Activated B cell treated with CpG ODN at 0.5 μM for 24 hours (primary cell): ENCODE measurements at regions of chr5 and their contacts with region 1.

Region 1: DNA sequence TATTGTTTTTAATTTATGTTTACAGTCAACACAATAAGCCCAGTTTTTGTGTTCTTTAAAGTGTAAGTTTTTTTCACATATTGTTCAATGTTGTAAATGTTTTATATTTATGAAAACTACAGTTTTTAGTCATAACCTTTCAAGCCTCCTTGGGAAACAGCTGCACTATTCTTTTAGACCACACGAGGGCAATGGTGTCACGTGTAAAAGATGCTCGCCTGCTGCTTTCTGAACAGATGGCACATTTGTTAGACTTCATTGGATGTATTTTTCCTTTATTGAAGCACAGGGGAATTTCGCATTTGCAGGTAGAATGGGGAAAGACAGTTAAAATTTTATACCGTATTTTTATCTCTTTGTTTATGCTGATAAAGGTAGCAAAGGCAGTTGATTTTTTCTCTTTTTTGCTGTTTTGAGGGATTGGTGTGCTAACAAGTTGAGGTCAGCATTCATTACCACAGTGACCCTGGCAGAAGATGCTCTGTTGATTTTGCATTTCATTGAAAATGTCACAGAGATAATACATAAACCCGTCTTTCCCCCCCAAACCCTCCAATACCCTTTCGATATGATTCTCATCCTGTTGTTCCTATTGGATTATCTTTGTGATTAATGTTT is 59.0 kb downstream of the MAT2B start:
- DNase-seq: peak; percentile 21
- ATAC-seq: peak; percentile 64
- H3K4me3 Mint-ChIP-seq: no peak overlapping the region
- H3K27ac Mint-ChIP-seq: no peak overlapping the region
- H3K4me1 Mint-ChIP-seq: peaks cover 24% of the 10 kb centered on the region
- H3K27me3 Mint-ChIP-seq: peaks cover 38% of the 10 kb centered on the region
- CTCF ChIP-seq: peak; percentile 90

Region 2: GRCh38 chr5:163005949-163006348 is 558.5 kb before region 1 on chr5:
- CTCF ChIA-PET with region 1: no interaction called
- POLR2A ChIA-PET with region 1: no interaction called
- intact Hi-C with region 1: no loop called
- DNase-seq: no peak
- ATAC-seq: no peak
- H3K4me3 Mint-ChIP-seq: no peak overlapping the region
- H3K27ac Mint-ChIP-seq: no peak overlapping the region
- H3K4me1 Mint-ChIP-seq: no peaks in the 10 kb centered on the region
- H3K27me3 Mint-ChIP-seq: no peaks in the 10 kb centered on the region
- CTCF ChIP-seq: no peak

Region 3: GRCh38 chr5:163473635-163474243 is 90.7 kb before region 1 on chr5:
- CTCF ChIA-PET with region 1: interaction called, 3 read pairs
- POLR2A ChIA-PET with region 1: no interaction called
- intact Hi-C with region 1: loop called (anchors 5 kb)
- DNase-seq: no peak
- ATAC-seq: peak; percentile 65
- H3K4me3 Mint-ChIP-seq: no peak overlapping the region
- H3K27ac Mint-ChIP-seq: no peak overlapping the region
- H3K4me1 Mint-ChIP-seq: no peaks in the 10 kb centered on the region
- H3K27me3 Mint-ChIP-seq: no peaks in the 10 kb centered on the region
- CTCF ChIP-seq: no peak

Region 4: DNA sequence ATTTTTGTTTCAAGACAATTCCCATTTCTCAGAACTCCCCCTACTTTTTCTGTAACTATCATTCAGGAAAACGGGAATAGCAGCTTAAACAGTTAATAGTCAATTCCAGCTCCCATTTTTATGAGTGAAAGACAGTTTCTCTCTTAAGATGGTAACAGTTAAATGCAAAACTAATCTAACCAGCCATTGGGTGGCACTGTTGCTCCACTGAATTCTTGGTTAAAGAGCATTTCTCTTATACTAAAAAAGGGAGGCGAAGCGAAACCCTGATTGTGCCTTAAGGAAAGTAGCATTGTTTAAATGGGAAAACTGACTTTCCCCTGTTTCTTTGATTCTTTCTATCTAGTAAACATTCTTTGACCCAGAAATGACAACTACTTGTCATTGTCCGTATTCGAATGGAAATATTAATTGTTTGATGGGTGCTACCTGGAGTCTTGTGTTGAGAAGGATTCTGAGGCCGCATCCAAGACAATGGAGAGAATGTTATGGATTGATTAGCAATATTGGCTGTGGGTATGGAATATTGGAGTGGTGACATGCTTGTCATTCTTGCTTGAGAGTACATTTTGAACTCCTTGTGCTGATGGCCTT is 448.7 kb after region 1 on chr5:
- CTCF ChIA-PET with region 1: interaction called, 3 read pairs
- POLR2A ChIA-PET with region 1: no interaction called
- intact Hi-C with region 1: loop called (anchors 1 kb)
- DNase-seq: no peak
- ATAC-seq: peak; percentile 50
- H3K4me3 Mint-ChIP-seq: no peak overlapping the region
- H3K27ac Mint-ChIP-seq: no peak overlapping the region
- H3K4me1 Mint-ChIP-seq: peaks cover 13% of the 10 kb centered on the region
- H3K27me3 Mint-ChIP-seq: no peaks in the 10 kb centered on the region
- CTCF ChIP-seq: no peak

Region 5: GRCh38 chr5:164504141-164504772 is 939.8 kb after region 1 on chr5:
- CTCF ChIA-PET with region 1: interaction called, 78 read pairs
- POLR2A ChIA-PET with region 1: no interaction called
- intact Hi-C with region 1: loop called (anchors 1 kb)
- DNase-seq: no peak
- ATAC-seq: peak; percentile 40
- H3K4me3 Mint-ChIP-seq: no peak overlapping the region
- H3K27ac Mint-ChIP-seq: no peak overlapping the region
- H3K4me1 Mint-ChIP-seq: peaks cover 6% of the 10 kb centered on the region
- H3K27me3 Mint-ChIP-seq: peaks cover 3% of the 10 kb centered on the region
- CTCF ChIP-seq: peak; percentile 69

Region 6: GRCh38 chr5:164672931-164673694 is 1108.7 kb after region 1 on chr5:
- CTCF ChIA-PET with region 1: no interaction called
- POLR2A ChIA-PET with region 1: no interaction called
- intact Hi-C with region 1: loop called (anchors 1 kb)
- DNase-seq: no peak
- ATAC-seq: no peak
- H3K4me3 Mint-ChIP-seq: no peak overlapping the region
- H3K27ac Mint-ChIP-seq: no peak overlapping the region
- H3K4me1 Mint-ChIP-seq: no peaks in the 10 kb centered on the region
- H3K27me3 Mint-ChIP-seq: no peaks in the 10 kb centered on the region
- CTCF ChIP-seq: no peak

Region 7: GRCh38 chr5:165209086-165209727 is 1644.8 kb after region 1 on chr5:
- CTCF ChIA-PET with region 1: interaction called, 3 read pairs
- POLR2A ChIA-PET with region 1: no interaction called
- intact Hi-C with region 1: loop called (anchors 1 kb)
- DNase-seq: no peak
- ATAC-seq: no peak
- H3K4me3 Mint-ChIP-seq: no peak overlapping the region
- H3K27ac Mint-ChIP-seq: no peak overlapping the region
- H3K4me1 Mint-ChIP-seq: no peaks in the 10 kb centered on the region
- H3K27me3 Mint-ChIP-seq: no peaks in the 10 kb centered on the region
- CTCF ChIP-seq: peak; percentile 32

Region 8: DNA sequence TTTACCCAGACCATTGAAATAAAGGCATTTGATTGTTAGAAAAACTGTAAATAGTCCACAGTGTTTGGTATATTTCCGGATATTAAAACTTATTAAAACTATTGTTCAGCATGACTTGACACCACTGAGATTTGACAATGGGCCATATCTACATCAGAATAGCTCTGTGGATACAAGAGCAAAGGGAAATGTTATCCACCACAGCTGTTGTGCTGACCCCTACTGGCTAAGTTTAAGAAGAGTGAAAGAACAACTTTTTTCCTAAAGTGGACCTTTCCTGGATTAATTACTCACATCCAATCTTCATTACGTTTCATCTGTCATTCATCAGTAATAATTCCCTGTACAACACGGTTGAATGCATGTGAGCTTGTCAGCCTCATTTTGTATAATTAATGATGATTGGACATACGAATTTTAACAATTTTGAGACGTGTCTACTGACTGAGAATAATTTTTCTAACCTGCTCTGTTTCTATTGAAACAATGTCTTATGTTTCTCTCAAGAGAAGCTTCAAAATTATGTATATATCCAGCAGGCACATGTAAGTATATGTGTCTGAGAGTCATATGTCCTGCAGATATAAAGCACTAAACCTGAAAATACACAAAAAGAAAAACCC is 1893.5 kb after region 1 on chr5:
- CTCF ChIA-PET with region 1: interaction called, 3 read pairs
- POLR2A ChIA-PET with region 1: interaction called, 3 read pairs
- intact Hi-C with region 1: loop called (anchors 5 kb)
- DNase-seq: no peak
- ATAC-seq: no peak
- H3K4me3 Mint-ChIP-seq: no peak overlapping the region
- H3K27ac Mint-ChIP-seq: no peak overlapping the region
- H3K4me1 Mint-ChIP-seq: no peaks in the 10 kb centered on the region
- H3K27me3 Mint-ChIP-seq: no peaks in the 10 kb centered on the region
- CTCF ChIP-seq: no peak